ENCODE measurements at regions of chr12 and their contacts with region 1.

Region 1: DNA sequence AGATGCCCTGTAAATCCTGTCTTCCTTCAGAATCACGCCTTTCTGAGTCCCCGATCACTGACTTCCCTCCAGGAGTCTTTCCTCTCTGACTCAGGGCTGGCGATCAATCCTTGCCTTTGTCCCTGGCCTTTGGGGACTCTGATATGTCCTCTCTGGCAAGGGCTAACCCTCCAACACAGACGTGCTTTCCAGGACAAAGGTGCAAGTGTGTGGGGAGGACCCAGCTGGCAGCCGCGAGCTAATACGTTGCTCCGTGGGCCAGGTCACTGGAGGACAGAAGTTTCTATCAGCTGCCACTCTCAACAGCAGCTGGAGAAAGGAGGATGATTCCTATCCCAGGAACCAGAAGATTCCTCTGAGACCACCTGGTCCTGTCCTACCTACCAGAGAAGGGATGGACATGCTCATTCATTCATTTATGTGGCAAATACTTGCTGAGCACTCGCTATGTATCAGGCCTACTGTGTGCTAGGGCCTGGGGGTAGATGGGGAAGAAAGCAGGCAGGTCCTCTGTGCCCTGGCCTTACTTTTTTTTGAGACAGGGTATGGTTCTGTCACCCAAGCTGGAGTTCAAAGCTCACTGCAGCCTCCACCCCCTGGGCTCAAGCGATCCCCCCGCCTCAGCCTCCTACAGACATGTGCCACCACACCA is 8.5 kb upstream of the SCARB1 start:
- DNase-seq: no peak
- ATAC-seq: no peak
- H3K4me3 ChIP-seq: no peak overlapping the region
- H3K4me3 Mint-ChIP-seq: no peak overlapping the region
- H3K27ac ChIP-seq: no peak overlapping the region
- H3K27ac Mint-ChIP-seq: no peak overlapping the region
- H3K4me1 ChIP-seq: peaks cover 0 to 9% of the 10 kb centered on the region in 2 experiments
- H3K4me1 Mint-ChIP-seq: peaks cover 0 to 14% (median 9%) of the 10 kb centered on the region in 3 donors
- H3K27me3 ChIP-seq: peaks cover 0 to 34% of the 10 kb centered on the region in 2 experiments
- H3K27me3 Mint-ChIP-seq: peaks cover 8 to 14% of the 10 kb centered on the region in 2 donors

Region 2: GRCh38 chr12:123972457-123973401 is 899.5 kb before region 1 on chr12 and contains the starts of genes CCDC92 and ZNF664:
- CTCF ChIA-PET with region 1: interaction called in 1 of 2 experiments, 10 read pairs
- POLR2A ChIA-PET with region 1: no interaction called
- DNase-seq: peak; percentile 84 to 98 (median 90)
- ATAC-seq: peak; percentile 82 to 86 (median 82)
- H3K4me3 ChIP-seq: peak within 1 kb of the TSS; percentile 60 to 76
- H3K4me3 Mint-ChIP-seq: peak within 1 kb of the TSS; percentile 92 to 93 (median 93)
- H3K27ac ChIP-seq: peak within 1 kb of the TSS; percentile 16
- H3K27ac Mint-ChIP-seq: peak within 1 kb of the TSS; percentile 79 to 95
- H3K4me1 ChIP-seq: peaks cover 10 to 12% of the 10 kb centered on the region in 2 experiments
- H3K4me1 Mint-ChIP-seq: peaks cover 30 to 45% (median 33%) of the 10 kb centered on the region in 3 donors
- H3K27me3 ChIP-seq: no peaks in the 10 kb centered on the region
- H3K27me3 Mint-ChIP-seq: no peaks in the 10 kb centered on the region
- total RNA-seq, gene CCDC92: 22.1 to 44.9 (median 38.7) TPM
- total RNA-seq, gene ZNF664: 30.6 to 58.2 (median 56.1) TPM